Naive thymus-derived CD8-positive, alpha-beta T cell (primary cell): ENCODE measurements at regions of chr1 and their contacts with region 1.

Region 1: GRCh38 chr1:85200870-85201339 is at the start of gene SYDE2:
- DNase-seq: peak; percentile 77 to 91 (median 88)
- ATAC-seq: peak; percentile 77 to 81
- H3K4me3 Mint-ChIP-seq: peak within 1 kb of the TSS; percentile 93 to 100 (median 98)
- H3K27ac Mint-ChIP-seq: peak within 1 kb of the TSS; percentile 98 to 100 (median 99)
- H3K4me1 Mint-ChIP-seq: peaks cover 7 to 46% (median 41%) of the 10 kb centered on the region in 4 donors
- H3K27me3 Mint-ChIP-seq: peaks cover 0 to 17% (median 0%) of the 10 kb centered on the region in 5 donors
- polyA plus RNA-seq, gene SYDE2: 2.7 to 5.8 (median 3.9) TPM

Region 2: GRCh38 chr1:85019994-85020393 is 180.9 kb before region 1 on chr1:
- POLR2A ChIA-PET with region 1: no interaction called
- DNase-seq: no peak
- ATAC-seq: no peak
- H3K4me3 Mint-ChIP-seq: no peak overlapping the region
- H3K27ac Mint-ChIP-seq: no peak overlapping the region
- H3K4me1 Mint-ChIP-seq: no peaks in the 10 kb centered on the region
- H3K27me3 Mint-ChIP-seq: peaks cover 0 to 4% (median 0%) of the 10 kb centered on the region in 5 donors

Region 3: DNA sequence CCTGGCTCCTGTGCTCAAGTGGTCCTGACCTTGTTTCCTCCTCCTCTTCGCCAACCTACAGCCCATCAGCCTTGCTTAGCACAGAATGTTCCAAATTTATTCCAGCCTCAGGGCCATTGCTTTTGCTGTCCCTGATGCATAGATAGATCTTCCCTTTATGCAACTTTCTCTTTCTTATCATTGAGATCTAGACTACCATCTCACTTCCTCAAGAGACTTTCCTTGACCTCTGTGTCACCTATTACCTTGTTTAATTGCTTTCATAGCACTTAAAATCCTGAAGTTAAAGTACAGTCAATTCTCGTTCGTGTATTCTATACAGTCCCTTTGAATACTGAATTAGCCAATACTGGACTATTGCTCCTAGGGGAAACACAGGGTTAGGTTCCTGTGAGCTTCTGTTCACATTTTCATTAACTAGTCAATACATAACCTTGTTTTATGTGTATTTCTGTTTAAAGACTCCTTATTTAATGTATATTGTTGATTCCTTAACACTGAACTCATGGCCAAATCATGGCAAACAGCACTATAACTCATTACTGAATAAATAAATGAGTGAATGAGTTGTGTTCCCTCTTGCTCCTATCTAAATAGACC is 126.4 kb before region 1 on chr1:
- POLR2A ChIA-PET with region 1: no interaction called
- DNase-seq: no peak
- ATAC-seq: no peak
- H3K4me3 Mint-ChIP-seq: no peak overlapping the region
- H3K27ac Mint-ChIP-seq: no peak overlapping the region
- H3K4me1 Mint-ChIP-seq: peaks cover 0 to 3% (median 1%) of the 10 kb centered on the region in 4 donors
- H3K27me3 Mint-ChIP-seq: peaks cover 0 to 10% (median 5%) of the 10 kb centered on the region in 5 donors

Region 4: DNA sequence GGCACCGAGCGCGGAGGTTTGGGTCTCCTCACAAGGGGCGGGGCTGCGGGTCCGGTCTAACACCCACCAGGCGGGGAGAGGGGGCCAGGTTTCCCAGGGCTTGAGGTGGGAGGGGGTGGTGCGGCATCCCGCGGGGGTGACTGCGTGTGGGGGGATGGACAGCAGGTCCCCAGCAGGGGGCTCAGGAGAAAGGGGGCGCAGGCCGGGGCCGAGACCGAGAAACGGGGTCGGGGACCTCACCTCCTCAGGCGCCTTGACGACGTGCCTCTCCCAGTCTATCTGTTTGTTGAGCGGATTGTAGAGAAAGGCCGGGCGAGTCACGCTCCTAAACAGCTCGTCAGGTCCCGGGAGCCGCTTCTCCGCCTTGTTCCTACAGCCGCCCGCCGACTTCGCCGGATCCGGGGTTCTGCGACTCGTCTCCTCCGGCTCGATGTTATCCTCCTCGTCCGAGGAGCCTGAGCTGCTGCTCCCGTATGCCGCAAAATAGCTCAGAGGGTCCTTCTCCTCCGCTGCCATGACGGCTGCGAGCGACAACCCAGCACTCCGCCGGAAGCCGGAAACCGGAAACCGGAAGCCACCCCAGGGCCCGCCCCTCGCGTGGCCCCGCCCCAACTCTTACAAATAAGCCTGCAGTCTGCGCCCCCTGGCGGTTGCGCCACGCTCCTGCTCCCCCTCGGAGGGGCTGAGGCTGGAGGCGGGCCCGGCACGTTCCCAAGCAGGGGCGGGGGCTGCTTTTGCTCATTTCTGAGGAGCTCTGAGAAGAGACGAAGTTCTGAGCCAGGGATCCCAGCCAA is 58.4 kb after region 1 on chr1 and contains the start of gene C1orf52:
- POLR2A ChIA-PET with region 1: interaction called, 13 read pairs
- DNase-seq: peak; percentile 90 to 98 (median 96)
- ATAC-seq: peak; percentile 92 to 96
- H3K4me3 Mint-ChIP-seq: peak within 1 kb of the TSS; percentile 94 to 99 (median 97)
- H3K27ac Mint-ChIP-seq: peak within 1 kb of the TSS; percentile 91 to 99 (median 98)
- H3K4me1 Mint-ChIP-seq: peaks cover 23 to 42% (median 39%) of the 10 kb centered on the region in 4 donors
- H3K27me3 Mint-ChIP-seq: no peaks in the 10 kb centered on the region
- polyA plus RNA-seq, gene C1orf52: 15.3 to 28.7 (median 22.4) TPM